Body of pancreas (tissue), 4 donors: ENCODE measurements at regions of chr2 and their contacts with region 1.

Region 1: DNA sequence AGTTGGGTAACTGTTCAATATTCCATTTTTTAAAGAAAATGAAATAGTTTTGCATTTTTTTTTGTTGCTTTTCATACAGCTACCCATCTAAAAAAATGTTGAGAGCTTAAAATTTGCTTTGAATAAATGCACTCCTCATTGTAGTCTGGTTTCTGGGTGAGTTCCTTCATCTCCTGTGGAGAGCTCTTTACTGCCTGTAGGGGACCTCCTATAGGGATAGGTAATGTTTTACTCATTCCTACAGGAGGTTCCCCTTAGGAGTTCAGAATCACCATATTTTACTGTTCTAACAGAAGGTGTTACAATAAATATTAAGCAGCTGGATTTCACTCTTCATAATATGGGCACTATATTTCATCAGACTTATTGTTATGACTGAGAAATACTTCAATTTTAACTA is 947.3 kb upstream of the CRIM1 start:
- DNase-seq: no peak
- ATAC-seq: no peak
- H3K4me3 ChIP-seq: no peak overlapping the region
- H3K27ac ChIP-seq: no peak overlapping the region
- H3K4me1 ChIP-seq: no peaks in the 10 kb centered on the region
- H3K27me3 ChIP-seq: no peaks in the 10 kb centered on the region
- CTCF ChIP-seq: no peak
- POLR2A ChIP-seq: no peak

Region 2: DNA sequence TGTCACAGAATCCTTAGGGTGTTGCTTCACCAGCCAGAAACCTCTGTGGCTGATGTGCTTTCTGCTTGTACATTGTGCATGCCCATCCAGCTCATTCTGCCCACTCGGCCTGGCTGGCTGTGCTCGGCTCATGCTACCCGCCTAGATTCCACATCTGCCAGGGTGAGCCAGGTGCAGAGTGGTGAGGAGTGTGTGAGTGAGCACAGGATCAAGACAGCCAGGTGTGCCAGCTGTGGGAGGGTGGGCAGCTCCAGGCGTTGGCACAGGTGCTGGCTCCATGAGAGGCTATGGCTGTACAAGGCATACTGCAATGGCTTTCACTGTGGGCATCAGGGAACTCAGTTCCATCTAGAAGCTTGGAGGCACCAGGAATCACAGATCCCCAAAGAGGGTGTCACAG is 374.6 kb before region 1 on chr2:
- intact Hi-C with region 1: loop called (anchors 5 kb)
- DNase-seq: no peak
- ATAC-seq: no peak
- H3K4me3 ChIP-seq: no peak overlapping the region
- H3K27ac ChIP-seq: no peak overlapping the region
- H3K4me1 ChIP-seq: no peaks in the 10 kb centered on the region
- H3K27me3 ChIP-seq: no peaks in the 10 kb centered on the region
- CTCF ChIP-seq: no peak
- POLR2A ChIP-seq: no peak

Region 3: DNA sequence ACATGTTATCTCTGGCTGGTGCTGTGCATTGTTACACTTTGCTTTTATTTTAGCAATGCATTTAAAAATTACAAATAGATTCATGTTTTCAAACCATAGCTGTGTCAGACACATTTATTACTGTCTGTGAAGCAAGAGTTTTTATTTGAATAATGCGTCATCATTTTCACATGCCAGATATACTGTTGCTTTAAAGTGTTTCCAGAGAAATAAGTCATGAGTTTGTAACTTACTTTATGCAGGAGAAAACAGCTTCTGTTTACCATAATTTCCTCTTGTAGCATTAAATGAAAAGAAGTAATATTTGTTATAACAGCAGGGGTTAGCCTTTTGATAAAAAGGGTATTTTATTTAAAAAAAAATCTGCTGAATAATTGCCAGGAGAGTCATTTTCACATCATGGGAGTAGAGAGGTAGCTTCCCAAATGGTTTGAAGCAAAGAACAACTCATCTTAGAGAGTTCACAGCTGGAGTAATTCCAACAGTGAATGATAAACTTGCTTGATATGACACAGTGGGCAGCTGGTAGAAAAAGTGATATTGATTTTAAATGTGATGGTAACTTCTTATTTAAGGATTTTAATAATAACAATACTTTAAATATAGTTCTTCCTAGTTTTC is 327.2 kb before region 1 on chr2:
- intact Hi-C with region 1: no loop called
- DNase-seq: no peak
- ATAC-seq: no peak
- H3K4me3 ChIP-seq: no peak overlapping the region
- H3K27ac ChIP-seq: no peak overlapping the region
- H3K4me1 ChIP-seq: no peaks in the 10 kb centered on the region
- H3K27me3 ChIP-seq: no peaks in the 10 kb centered on the region
- CTCF ChIP-seq: no peak
- POLR2A ChIP-seq: no peak

Region 4: GRCh38 chr2:35688309-35688708 is 280.0 kb after region 1 on chr2:
- intact Hi-C with region 1: no loop called
- DNase-seq: no peak
- ATAC-seq: no peak
- H3K4me3 ChIP-seq: no peak overlapping the region
- H3K27ac ChIP-seq: no peak overlapping the region
- H3K4me1 ChIP-seq: no peaks in the 10 kb centered on the region
- H3K27me3 ChIP-seq: no peaks in the 10 kb centered on the region
- CTCF ChIP-seq: no peak
- POLR2A ChIP-seq: no peak